T-cell (primary cell): ENCODE measurements at regions of chr7 and their contacts with region 1.

Region 1: DNA sequence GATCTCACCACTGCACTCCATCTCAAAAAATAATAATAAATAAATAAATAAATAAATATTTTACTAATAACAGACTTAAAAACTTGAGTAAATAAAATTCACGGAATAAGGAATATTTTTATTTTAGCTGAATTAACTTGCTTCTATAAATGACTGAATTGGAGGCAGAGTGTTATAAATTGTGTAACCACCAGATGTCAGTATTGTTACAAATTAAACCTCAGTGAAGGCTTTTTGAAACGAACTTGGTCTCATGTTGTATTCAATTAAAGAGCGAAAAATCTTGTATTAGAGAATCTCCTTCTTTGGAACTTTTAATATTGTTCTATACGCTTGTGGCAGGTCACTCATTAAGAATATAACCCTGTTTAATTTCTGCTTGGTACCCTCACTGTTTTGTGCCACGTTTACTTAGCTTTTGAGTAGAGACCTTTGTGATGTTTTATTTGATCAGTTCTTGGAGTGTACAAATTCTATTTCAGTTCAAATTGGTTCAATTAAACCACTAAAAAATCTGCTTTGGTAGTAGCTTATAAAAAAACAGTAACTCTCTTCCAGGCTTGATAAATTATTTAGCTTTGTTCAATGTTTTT is 45.6 kb upstream of the SCIN start:
- DNase-seq: peak in 1 of 35 experiments; percentile 55
- ATAC-seq: no peak
- H3K4me3 ChIP-seq: no peak overlapping the region
- H3K4me3 Mint-ChIP-seq: no peak overlapping the region
- H3K27ac ChIP-seq: no peak overlapping the region
- H3K27ac Mint-ChIP-seq: no peak overlapping the region
- H3K4me1 ChIP-seq: no peaks in the 10 kb centered on the region
- H3K4me1 Mint-ChIP-seq: no peaks in the 10 kb centered on the region
- H3K27me3 ChIP-seq: peaks cover 0 to 3% of the 10 kb centered on the region in 2 experiments
- H3K27me3 Mint-ChIP-seq: peaks cover 20 to 31% of the 10 kb centered on the region in 2 donors

Region 2: DNA sequence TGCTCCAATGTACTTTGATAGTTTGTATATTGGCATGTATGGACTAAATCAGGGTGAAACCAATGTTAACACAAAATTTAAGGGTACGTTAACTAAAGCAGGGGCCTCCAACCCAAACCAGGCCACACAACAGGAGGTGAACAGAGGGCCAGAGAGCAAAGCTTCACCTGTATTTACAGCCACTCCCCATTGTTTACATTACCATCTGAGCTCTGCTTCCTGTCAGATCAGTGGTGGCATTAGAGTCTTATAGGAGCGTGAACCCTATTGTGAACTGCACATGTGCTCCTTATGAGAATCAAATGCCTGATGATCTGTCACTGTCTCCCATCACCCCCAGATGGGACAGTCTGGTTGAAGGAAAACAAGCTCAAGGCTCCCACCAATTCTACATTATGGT is 16.3 kb before region 1 on chr7:
- CTCF ChIA-PET with region 1: interaction called in 1 of 2 experiments, 6 read pairs
- POLR2A ChIA-PET with region 1: interaction called in 1 of 2 experiments, 10 read pairs
- DNase-seq: no peak
- ATAC-seq: no peak
- H3K4me3 ChIP-seq: no peak overlapping the region
- H3K4me3 Mint-ChIP-seq: no peak overlapping the region
- H3K27ac ChIP-seq: no peak overlapping the region
- H3K27ac Mint-ChIP-seq: no peak overlapping the region
- H3K4me1 ChIP-seq: no peaks in the 10 kb centered on the region
- H3K4me1 Mint-ChIP-seq: no peaks in the 10 kb centered on the region
- H3K27me3 ChIP-seq: no peaks in the 10 kb centered on the region
- H3K27me3 Mint-ChIP-seq: peaks cover 0 to 6% of the 10 kb centered on the region in 2 donors

Region 3: DNA sequence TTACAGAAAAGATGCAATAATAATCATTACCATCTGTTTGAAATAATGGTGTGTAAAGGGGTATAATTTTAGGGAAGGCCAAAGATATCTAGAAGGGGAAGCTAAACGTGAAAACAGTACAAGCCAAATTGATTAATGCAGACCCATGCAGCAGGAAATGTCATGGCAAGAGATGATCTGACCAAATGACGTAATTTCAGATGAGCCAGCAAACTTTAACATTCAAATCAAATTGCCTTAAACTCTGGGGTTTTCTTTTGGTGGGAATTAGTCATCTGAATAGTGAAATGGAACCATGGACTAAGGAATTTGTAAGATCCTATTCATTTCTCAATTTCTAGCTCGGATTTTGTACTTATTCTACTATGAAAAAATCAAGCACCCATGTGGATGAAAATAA is 24.2 kb after region 1 on chr7:
- CTCF ChIA-PET with region 1: no interaction called
- POLR2A ChIA-PET with region 1: no interaction called
- DNase-seq: no peak
- ATAC-seq: no peak
- H3K4me3 ChIP-seq: no peak overlapping the region
- H3K4me3 Mint-ChIP-seq: no peak overlapping the region
- H3K27ac ChIP-seq: no peak overlapping the region
- H3K27ac Mint-ChIP-seq: no peak overlapping the region
- H3K4me1 ChIP-seq: no peaks in the 10 kb centered on the region
- H3K4me1 Mint-ChIP-seq: no peaks in the 10 kb centered on the region
- H3K27me3 ChIP-seq: peaks cover 0 to 10% of the 10 kb centered on the region in 2 experiments
- H3K27me3 Mint-ChIP-seq: peaks cover 0 to 7% of the 10 kb centered on the region in 2 donors

Region 4: GRCh38 chr7:13115213-13115665 is 590.3 kb after region 1 on chr7:
- CTCF ChIA-PET with region 1: no interaction called
- POLR2A ChIA-PET with region 1: no interaction called
- DNase-seq: no peak
- ATAC-seq: no peak
- H3K4me3 ChIP-seq: no peak overlapping the region
- H3K4me3 Mint-ChIP-seq: no peak overlapping the region
- H3K27ac ChIP-seq: no peak overlapping the region
- H3K27ac Mint-ChIP-seq: no peak overlapping the region
- H3K4me1 ChIP-seq: no peaks in the 10 kb centered on the region
- H3K4me1 Mint-ChIP-seq: no peaks in the 10 kb centered on the region
- H3K27me3 ChIP-seq: no peaks in the 10 kb centered on the region
- H3K27me3 Mint-ChIP-seq: peaks cover 0 to 3% of the 10 kb centered on the region in 2 donors

Region 5: DNA sequence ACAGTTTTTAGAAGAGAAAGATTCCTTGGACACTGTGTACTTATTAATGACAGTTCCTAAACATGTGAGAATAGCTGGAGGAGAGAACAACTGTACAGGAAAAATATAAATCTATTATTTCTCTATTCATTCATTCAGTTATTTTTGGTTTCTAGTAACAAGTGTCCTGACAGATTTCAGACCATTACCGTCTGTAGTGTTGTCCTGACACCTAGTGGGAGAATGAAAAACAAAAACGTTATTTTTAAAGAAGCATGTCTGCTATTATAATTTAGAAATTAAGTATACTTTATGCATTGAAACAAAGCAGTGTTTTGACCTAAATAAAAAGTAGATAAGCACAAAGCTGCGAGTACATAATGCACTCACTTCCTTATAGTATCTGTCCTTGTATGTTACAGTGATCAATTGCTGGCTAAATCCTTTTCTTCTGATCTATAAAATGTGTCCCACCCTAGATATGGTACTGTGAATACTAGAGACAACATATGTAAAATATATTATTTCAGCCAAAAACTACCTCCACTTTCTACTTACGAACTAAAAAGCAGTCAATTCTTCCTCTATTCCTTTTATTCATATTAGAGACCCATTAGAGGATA is 738.1 kb after region 1 on chr7:
- CTCF ChIA-PET with region 1: interaction called, 4 to 18 read pairs
- POLR2A ChIA-PET with region 1: no interaction called
- DNase-seq: peak in 1 of 35 experiments; percentile 60
- ATAC-seq: no peak
- H3K4me3 ChIP-seq: no peak overlapping the region
- H3K4me3 Mint-ChIP-seq: no peak overlapping the region
- H3K27ac ChIP-seq: no peak overlapping the region
- H3K27ac Mint-ChIP-seq: no peak overlapping the region
- H3K4me1 ChIP-seq: no peaks in the 10 kb centered on the region
- H3K4me1 Mint-ChIP-seq: no peaks in the 10 kb centered on the region
- H3K27me3 ChIP-seq: peaks cover 0 to 4% of the 10 kb centered on the region in 2 experiments
- H3K27me3 Mint-ChIP-seq: peaks cover 0 to 14% of the 10 kb centered on the region in 2 donors